ENCODE measurements at regions of chr17 and their contacts with region 1.

Region 1: GRCh38 chr17:63611354-63611753 is 10.7 kb downstream of the TACO1 start:
- DNase-seq: no peak
- ATAC-seq: no peak
- H3K4me3 ChIP-seq: no peak overlapping the region
- H3K27ac ChIP-seq: peak overlapping the region in 1 of 10 donors; percentile 62
- H3K4me1 ChIP-seq: no peaks in the 10 kb centered on the region
- H3K27me3 ChIP-seq: no peaks in the 10 kb centered on the region
- CTCF ChIP-seq: no peak

Region 2: GRCh38 chr17:63419949-63420867 is 191.1 kb before region 1 on chr17:
- intact Hi-C with region 1: loop called in 7 of 10 experiments (anchors 1 to 5 kb)
- DNase-seq: no peak
- ATAC-seq: peak in 7 of 8 donors; percentile 8 to 52 (median 35)
- H3K4me3 ChIP-seq: no peak overlapping the region
- H3K27ac ChIP-seq: peak overlapping the region in 3 of 10 donors; percentile 9 to 36 (median 35)
- H3K4me1 ChIP-seq: peaks cover 0 to 29% (median 9%) of the 10 kb centered on the region in 9 donors
- H3K27me3 ChIP-seq: no peaks in the 10 kb centered on the region
- CTCF ChIP-seq: no peak

Region 3: DNA sequence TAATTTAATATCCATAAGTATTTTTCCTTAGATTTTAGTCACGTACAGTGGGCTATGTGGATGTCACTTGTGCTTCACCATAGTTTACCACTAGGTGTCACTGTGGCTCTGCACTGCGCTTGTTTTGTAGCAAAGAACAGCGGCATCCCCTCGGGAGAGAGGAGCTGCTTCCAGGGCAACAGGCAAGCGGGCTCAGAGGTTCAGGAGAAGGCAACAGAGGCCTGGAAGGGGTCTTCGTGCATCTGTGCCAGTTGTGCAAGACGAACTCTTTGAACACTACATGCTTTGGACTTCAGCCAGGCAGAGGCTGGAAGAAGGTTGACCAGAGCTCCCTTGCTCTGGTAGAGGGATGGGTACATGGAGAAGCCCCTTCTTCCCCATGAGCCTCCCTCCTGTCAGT is 185.9 kb before region 1 on chr17:
- intact Hi-C with region 1: loop called (anchors 1 to 5 kb)
- DNase-seq: peak; percentile 63 to 84
- ATAC-seq: peak; percentile 75 to 88 (median 86)
- H3K4me3 ChIP-seq: no peak overlapping the region
- H3K27ac ChIP-seq: no peak overlapping the region
- H3K4me1 ChIP-seq: peaks cover 0 to 49% (median 25%) of the 10 kb centered on the region in 9 donors
- H3K27me3 ChIP-seq: no peaks in the 10 kb centered on the region
- CTCF ChIP-seq: peak; percentile 89 to 98 (median 98)

Region 4: GRCh38 chr17:63434876-63435684 is 176.3 kb before region 1 on chr17:
- intact Hi-C with region 1: loop called in 1 of 10 experiments (anchors 5 kb)
- DNase-seq: peak; percentile 79 to 83
- ATAC-seq: peak; percentile 24 to 83 (median 70)
- H3K4me3 ChIP-seq: peak overlapping the region in 1 of 10 donors; percentile 5
- H3K27ac ChIP-seq: peak overlapping the region in 9 of 10 donors; percentile 25 to 79 (median 65)
- H3K4me1 ChIP-seq: peaks cover 33 to 82% (median 71%) of the 10 kb centered on the region in 9 donors
- H3K27me3 ChIP-seq: no peaks in the 10 kb centered on the region
- CTCF ChIP-seq: peak in 5 of 9 donors; percentile 10 to 46 (median 14)

Region 5: GRCh38 chr17:63542942-63543821 is 68.2 kb before region 1 on chr17:
- intact Hi-C with region 1: no loop called
- DNase-seq: no peak
- ATAC-seq: no peak
- H3K4me3 ChIP-seq: no peak overlapping the region
- H3K27ac ChIP-seq: no peak overlapping the region
- H3K4me1 ChIP-seq: peaks cover 0 to 5% (median 3%) of the 10 kb centered on the region in 9 donors
- H3K27me3 ChIP-seq: peaks cover 0 to 19% (median 16%) of the 10 kb centered on the region in 7 donors
- CTCF ChIP-seq: no peak

Region 6: DNA sequence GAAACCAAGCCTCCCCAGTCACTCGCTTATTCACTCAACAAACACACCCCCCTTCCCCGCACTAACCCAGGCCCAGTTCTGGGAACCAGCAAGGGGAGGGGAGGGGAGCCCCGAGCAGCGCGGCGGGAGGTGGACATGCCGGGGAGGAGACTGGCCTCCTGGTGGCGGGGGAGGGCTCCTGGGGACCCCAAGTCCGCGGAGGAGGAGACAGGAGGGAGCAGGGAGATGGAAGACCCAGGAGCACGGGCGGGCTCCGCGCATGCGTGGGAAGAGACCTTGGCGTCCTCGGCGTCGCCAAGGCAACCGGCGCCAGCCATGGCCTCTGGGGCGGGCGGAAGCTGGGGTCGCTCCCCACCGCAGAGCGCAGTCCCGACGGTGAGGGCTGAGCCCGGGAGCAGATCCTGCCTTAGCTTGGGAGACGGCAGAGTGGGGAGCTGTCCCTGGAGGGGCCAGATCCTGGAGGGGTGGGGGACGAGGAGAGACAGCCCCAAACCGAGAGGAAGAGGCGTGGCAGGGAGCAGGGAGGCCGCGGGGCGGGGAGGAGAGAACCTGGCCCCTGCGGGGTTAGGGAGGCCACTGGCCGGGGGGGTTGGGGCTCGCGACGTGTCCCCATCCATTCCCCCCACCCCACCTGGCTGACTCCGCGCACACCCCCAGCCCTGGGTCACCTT is 386.8 kb after region 1 on chr17 and contains the start of gene PRR29:
- intact Hi-C with region 1: no loop called
- DNase-seq: peak; percentile 72 to 77
- ATAC-seq: peak; percentile 53 to 67 (median 58)
- H3K4me3 ChIP-seq: peak within 1 kb of the TSS; percentile 41 to 71 (median 63)
- H3K27ac ChIP-seq: peak within 1 kb of the TSS; percentile 36 to 81 (median 70)
- H3K4me1 ChIP-seq: peaks cover 4 to 60% (median 45%) of the 10 kb centered on the region in 9 donors
- H3K27me3 ChIP-seq: peaks cover 5 to 36% (median 23%) of the 10 kb centered on the region in 7 donors
- CTCF ChIP-seq: no peak
- total RNA-seq, gene PRR29: 0.21 to 0.44 (median 0.29) TPM in 6 of 10 donors, not detected in the others

Measured in heart right ventricle (tissue), 16 donors.